Naive thymus-derived CD8-positive, alpha-beta T cell (primary cell): ENCODE measurements at regions of chr6 and their contacts with region 1.

Region 1: GRCh38 chr6:159761873-159762680 is at the start of gene ACAT2:
- DNase-seq: peak; percentile 88 to 97 (median 91)
- ATAC-seq: peak; percentile 92 to 93
- H3K4me3 Mint-ChIP-seq: peak within 1 kb of the TSS; percentile 91 to 97 (median 93)
- H3K27ac Mint-ChIP-seq: peak within 1 kb of the TSS; percentile 94 to 99 (median 98)
- H3K4me1 Mint-ChIP-seq: peaks cover 20 to 34% (median 29%) of the 10 kb centered on the region in 4 donors
- H3K27me3 Mint-ChIP-seq: no peaks in the 10 kb centered on the region
- polyA plus RNA-seq, gene ACAT2: 29.4 to 38.8 (median 38.2) TPM

Region 2: GRCh38 chr6:159616456-159616855 is 145.6 kb before region 1 on chr6:
- POLR2A ChIA-PET with region 1: no interaction called
- DNase-seq: no peak
- ATAC-seq: no peak
- H3K4me3 Mint-ChIP-seq: no peak overlapping the region
- H3K27ac Mint-ChIP-seq: no peak overlapping the region
- H3K4me1 Mint-ChIP-seq: no peaks in the 10 kb centered on the region
- H3K27me3 Mint-ChIP-seq: peaks cover 0 to 3% (median 0%) of the 10 kb centered on the region in 5 donors

Region 3: DNA sequence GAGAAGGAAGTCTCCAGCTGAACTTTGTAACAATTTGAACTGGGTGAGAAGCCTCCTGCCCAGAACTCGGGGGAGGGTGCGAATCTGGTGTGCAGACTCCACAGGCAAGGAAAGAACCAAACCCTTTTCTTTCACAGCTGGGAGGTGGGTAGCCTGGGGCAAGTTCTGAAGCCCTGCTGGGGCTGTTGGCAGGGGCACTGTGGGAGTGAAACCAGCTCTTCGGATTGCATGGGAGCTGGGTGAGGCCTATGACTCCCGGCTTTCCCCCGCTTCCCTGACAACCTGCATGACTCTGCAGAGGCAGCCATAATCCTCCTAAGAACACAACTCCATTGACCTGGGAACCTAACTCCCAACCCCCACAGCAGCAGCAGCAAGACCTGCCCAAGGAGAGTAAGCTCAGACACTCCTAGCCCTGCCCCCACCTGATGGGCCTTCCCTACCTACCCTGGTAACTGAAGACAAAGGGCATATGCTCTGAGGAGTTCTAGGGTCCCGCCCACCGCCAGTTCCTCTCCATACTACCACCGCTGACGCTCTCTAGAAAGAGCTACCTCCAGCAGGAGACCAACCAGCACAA is 106.6 kb before region 1 on chr6:
- POLR2A ChIA-PET with region 1: no interaction called
- DNase-seq: no peak
- ATAC-seq: no peak
- H3K4me3 Mint-ChIP-seq: no peak overlapping the region
- H3K27ac Mint-ChIP-seq: peak overlapping the region in 2 of 10 donors; percentile 24 to 27
- H3K4me1 Mint-ChIP-seq: no peaks in the 10 kb centered on the region
- H3K27me3 Mint-ChIP-seq: no peaks in the 10 kb centered on the region

Region 4: DNA sequence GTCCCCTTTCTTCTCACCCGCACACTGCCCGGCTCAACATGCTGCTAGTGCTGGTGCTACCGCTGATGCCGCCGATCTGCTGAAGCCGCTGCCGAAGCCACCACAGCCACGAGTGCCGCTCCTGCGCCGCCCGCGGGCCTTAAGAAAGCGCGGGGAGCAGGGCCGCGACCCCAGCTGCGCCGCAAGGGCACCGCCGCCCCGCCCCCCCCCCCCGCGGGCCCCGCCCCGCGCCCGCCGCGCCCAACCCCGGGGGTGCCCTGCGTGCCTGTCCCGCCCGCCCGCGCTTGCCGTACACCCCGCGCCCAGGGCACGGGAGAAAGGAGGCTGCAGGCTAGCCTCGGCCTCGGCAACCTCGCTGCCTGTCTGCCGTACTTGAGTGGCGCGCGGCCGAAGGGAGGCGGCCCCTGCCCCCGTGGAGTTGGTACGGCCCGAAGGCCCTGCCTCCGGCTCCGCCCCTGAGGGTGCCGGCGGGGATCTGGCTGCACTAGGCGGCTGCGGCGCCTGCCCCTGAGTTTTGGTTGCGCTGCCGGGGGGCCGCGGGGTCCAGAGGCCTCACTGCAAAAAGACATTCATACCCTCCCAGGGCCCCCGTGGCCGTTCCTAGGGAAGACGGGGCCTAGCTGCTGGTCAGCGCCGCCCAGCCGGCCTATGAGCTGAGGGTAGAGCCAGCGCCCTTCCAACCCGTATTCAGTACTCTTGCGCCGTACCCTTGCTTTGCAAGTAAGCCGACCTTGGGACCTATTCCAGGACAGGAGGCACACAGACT is 68.8 kb before region 1 on chr6 and contains the start of gene SOD2:
- POLR2A ChIA-PET with region 1: interaction called, 24 read pairs
- DNase-seq: peak; percentile 70 to 95 (median 84)
- ATAC-seq: peak; percentile 74 to 77
- H3K4me3 Mint-ChIP-seq: peak within 1 kb of the TSS; percentile 88 to 97 (median 94)
- H3K27ac Mint-ChIP-seq: peak within 1 kb of the TSS; percentile 35 to 98 (median 96)
- H3K4me1 Mint-ChIP-seq: peaks cover 29 to 45% (median 45%) of the 10 kb centered on the region in 4 donors
- H3K27me3 Mint-ChIP-seq: no peaks in the 10 kb centered on the region
- polyA plus RNA-seq, gene SOD2: 80.5 to 92.0 (median 90.0) TPM

Region 5: DNA sequence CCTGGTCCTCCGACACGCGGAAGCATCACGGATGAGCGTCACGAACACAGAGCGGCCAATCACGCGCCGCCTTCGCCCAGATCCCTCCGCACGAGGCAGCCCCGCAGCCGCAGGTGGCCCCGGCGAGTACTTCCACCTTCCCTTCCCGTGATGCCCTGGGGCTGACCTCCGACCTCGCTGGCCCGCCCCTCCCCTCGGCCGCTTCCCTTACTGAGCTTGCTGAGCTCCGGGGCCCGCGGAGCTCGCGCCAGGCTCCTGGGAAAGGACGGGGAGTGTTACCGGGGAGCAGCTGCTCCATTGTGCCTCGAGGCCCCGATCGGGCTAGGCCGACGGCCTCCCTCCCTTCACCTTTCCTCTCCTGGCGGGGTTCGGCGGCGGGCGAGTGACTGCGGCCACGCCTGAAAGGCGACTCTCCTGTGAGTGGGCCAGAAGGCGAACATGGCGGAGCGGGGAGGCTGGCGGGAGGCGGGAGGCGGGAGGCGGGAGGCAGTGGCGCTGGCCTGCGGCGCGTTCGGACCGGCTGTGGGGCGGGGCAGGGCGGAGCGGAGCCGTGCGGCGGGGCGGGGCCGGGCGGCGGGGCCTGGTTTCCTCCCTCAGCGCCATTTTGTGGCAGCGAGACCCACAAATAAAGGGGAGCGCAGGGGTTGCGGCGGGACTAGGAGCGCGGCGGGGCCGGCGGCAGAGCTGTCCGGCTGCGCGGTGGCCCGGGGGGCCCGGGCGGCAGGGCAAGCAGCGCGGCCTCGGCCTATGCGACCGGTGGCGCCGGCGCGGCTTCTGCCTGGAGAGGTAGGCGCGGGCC is 35.0 kb before region 1 on chr6 and contains the start of gene WTAP:
- POLR2A ChIA-PET with region 1: interaction called, 81 read pairs
- DNase-seq: peak; percentile 93 to 99 (median 97)
- ATAC-seq: peak; percentile 80 to 82
- H3K4me3 Mint-ChIP-seq: peak within 1 kb of the TSS; percentile 88 to 96 (median 96)
- H3K27ac Mint-ChIP-seq: peak within 1 kb of the TSS; percentile 97 to 99 (median 99)
- H3K4me1 Mint-ChIP-seq: peaks cover 21 to 69% (median 57%) of the 10 kb centered on the region in 4 donors
- H3K27me3 Mint-ChIP-seq: peaks cover 0 to 2% (median 0%) of the 10 kb centered on the region in 5 donors
- polyA plus RNA-seq, gene WTAP: 104 to 128 (median 122) TPM

Region 6: GRCh38 chr6:159746759-159747158 is 15.3 kb before region 1 on chr6:
- POLR2A ChIA-PET with region 1: interaction called, 12 read pairs
- DNase-seq: no peak
- ATAC-seq: no peak
- H3K4me3 Mint-ChIP-seq: no peak overlapping the region
- H3K27ac Mint-ChIP-seq: no peak overlapping the region
- H3K4me1 Mint-ChIP-seq: peaks cover 6 to 22% (median 15%) of the 10 kb centered on the region in 4 donors
- H3K27me3 Mint-ChIP-seq: no peaks in the 10 kb centered on the region

Region 7: DNA sequence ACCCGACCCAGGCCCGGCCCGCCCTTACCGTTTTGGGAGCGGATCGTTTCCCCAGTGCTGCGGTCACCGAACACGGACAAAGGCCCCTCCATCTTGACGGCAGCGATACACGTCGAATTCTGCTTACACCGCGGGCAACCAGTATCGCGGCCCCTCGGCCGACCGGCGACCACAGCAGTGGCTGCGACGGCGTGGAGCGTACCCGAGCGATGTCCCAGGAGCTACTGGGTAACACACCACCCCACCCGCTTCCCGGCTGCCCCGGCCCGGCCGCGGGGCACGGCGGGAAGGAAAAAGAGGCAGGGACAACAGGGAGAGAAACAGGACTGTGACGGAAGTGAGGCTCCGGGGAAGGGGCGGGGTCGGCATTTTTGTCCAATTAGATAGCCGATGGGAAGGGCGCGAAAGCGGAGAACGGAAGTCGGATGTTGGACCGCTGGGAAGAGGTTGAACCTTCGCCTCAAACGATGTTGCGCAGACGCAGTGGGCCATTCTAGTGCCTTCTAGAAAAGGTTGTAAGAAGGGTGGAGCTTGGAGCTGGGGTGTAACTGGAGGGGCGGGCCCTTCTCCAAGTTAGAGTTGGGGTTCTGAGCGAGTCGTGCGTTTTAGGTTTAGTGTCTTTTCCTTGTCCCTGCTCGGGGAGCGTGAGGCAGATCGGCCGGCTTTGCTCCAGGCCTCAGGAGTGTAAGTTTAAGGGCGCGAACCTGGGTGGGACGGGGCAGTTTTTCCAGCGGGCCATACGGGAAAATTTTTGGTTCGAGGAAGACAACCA is 27.5 kb after region 1 on chr6 and contains the start of gene TCP1:
- POLR2A ChIA-PET with region 1: interaction called, 80 read pairs
- DNase-seq: peak; percentile 91 to 99 (median 98)
- ATAC-seq: peak; percentile 77 to 81
- H3K4me3 Mint-ChIP-seq: peak within 1 kb of the TSS; percentile 97 to 100 (median 99)
- H3K27ac Mint-ChIP-seq: peak within 1 kb of the TSS; percentile 84 to 99 (median 98)
- H3K4me1 Mint-ChIP-seq: peaks cover 27 to 67% (median 66%) of the 10 kb centered on the region in 4 donors
- H3K27me3 Mint-ChIP-seq: no peaks in the 10 kb centered on the region
- polyA plus RNA-seq, gene TCP1: 68.8 to 97.6 (median 72.4) TPM

Region 8: DNA sequence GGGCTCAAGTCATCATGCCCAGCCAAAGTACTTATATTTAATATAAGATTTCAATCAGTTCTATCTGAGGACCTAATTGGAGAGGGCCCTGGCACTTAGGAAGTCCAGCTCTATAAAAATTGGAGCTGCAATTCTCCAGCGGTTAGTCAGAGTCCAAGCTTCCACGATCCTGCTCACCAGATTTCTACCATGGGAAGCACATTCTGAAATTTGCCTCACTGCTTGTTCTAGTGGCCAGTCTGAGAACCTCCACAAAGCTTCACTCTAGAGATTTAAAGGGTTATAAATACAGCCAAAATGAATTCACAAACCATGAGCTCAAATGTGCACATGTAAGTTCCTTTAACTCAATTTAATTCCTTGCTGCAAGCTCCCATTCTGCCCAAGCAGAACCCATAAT is 71.5 kb after region 1 on chr6:
- POLR2A ChIA-PET with region 1: interaction called, 11 read pairs
- DNase-seq: no peak
- ATAC-seq: peak; percentile 35 to 36
- H3K4me3 Mint-ChIP-seq: peak overlapping the region in 6 of 10 donors; percentile 26 to 47 (median 32)
- H3K27ac Mint-ChIP-seq: peak overlapping the region in 9 of 10 donors; percentile 13 to 87 (median 63)
- H3K4me1 Mint-ChIP-seq: peaks cover 17 to 59% (median 49%) of the 10 kb centered on the region in 4 donors
- H3K27me3 Mint-ChIP-seq: no peaks in the 10 kb centered on the region